Activated B cell treated with CpG ODN at 0.5 μM for 24 hours (primary cell): ENCODE measurements at regions of chr4 and their contacts with region 1.

Region 1: GRCh38 chr4:118278473-118279274 is 74.1 kb downstream of the PRSS12 start:
- DNase-seq: peak; percentile 90
- ATAC-seq: peak; percentile 98
- H3K4me3 Mint-ChIP-seq: peak overlapping the region; percentile 94
- H3K27ac Mint-ChIP-seq: peak overlapping the region; percentile 97
- H3K4me1 Mint-ChIP-seq: peaks cover 61% of the 10 kb centered on the region
- H3K27me3 Mint-ChIP-seq: no peaks in the 10 kb centered on the region
- CTCF ChIP-seq: no peak

Region 2: GRCh38 chr4:117210551-117210950 is 1068.1 kb before region 1 on chr4:
- CTCF ChIA-PET with region 1: no interaction called
- POLR2A ChIA-PET with region 1: no interaction called
- intact Hi-C with region 1: no loop called
- DNase-seq: no peak
- ATAC-seq: no peak
- H3K4me3 Mint-ChIP-seq: no peak overlapping the region
- H3K27ac Mint-ChIP-seq: no peak overlapping the region
- H3K4me1 Mint-ChIP-seq: no peaks in the 10 kb centered on the region
- H3K27me3 Mint-ChIP-seq: no peaks in the 10 kb centered on the region
- CTCF ChIP-seq: no peak

Region 3: DNA sequence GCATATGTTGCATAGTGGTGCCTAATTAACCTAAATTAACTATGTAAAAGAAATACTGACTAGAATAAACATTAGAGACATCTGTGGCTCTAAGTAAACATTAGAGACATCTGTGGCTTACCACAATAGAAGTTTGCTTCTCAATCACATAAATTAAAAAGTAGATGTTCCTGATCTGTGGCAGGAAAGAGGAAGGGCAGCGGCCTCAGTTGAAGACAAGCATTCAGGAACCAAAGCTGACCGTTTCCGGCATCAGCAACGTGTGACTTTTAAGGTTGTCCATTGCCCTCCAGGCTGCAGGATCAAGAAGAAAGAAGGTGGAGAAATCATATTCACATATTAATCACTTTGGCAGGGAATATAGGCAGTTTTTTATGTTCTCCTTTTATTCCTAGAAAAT is 857.0 kb before region 1 on chr4:
- CTCF ChIA-PET with region 1: no interaction called
- POLR2A ChIA-PET with region 1: no interaction called
- intact Hi-C with region 1: no loop called
- DNase-seq: no peak
- ATAC-seq: no peak
- H3K4me3 Mint-ChIP-seq: no peak overlapping the region
- H3K27ac Mint-ChIP-seq: no peak overlapping the region
- H3K4me1 Mint-ChIP-seq: no peaks in the 10 kb centered on the region
- H3K27me3 Mint-ChIP-seq: no peaks in the 10 kb centered on the region
- CTCF ChIP-seq: no peak

Region 4: GRCh38 chr4:117596917-117597480 is 681.7 kb before region 1 on chr4:
- CTCF ChIA-PET with region 1: no interaction called
- POLR2A ChIA-PET with region 1: no interaction called
- intact Hi-C with region 1: no loop called
- DNase-seq: no peak
- ATAC-seq: no peak
- H3K4me3 Mint-ChIP-seq: no peak overlapping the region
- H3K27ac Mint-ChIP-seq: no peak overlapping the region
- H3K4me1 Mint-ChIP-seq: no peaks in the 10 kb centered on the region
- H3K27me3 Mint-ChIP-seq: no peaks in the 10 kb centered on the region
- CTCF ChIP-seq: no peak

Region 5: DNA sequence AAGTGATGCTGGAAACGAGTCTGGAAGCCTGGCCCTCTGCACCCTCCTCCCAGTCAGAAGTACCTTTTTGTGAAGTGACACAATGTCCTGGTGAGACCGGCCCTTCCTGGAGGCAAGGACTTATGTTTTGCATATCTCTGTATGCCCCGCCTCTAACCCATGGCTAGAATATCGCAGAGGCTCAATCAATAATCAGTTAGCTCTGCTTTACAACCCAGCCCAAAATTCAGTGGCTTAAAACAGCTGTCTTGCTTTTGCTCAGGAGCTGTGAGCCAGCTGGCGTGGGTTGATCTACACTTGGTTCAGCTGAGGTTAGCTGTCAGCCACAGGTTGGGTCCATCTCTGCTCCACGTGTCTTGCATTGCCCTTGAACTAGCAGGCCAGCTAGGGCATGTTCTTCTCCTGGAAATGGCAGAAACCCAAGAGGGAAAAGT is 307.7 kb after region 1 on chr4:
- CTCF ChIA-PET with region 1: no interaction called
- POLR2A ChIA-PET with region 1: no interaction called
- intact Hi-C with region 1: loop called (anchors 1 kb)
- DNase-seq: no peak
- ATAC-seq: no peak
- H3K4me3 Mint-ChIP-seq: no peak overlapping the region
- H3K27ac Mint-ChIP-seq: no peak overlapping the region
- H3K4me1 Mint-ChIP-seq: peaks cover 11% of the 10 kb centered on the region
- H3K27me3 Mint-ChIP-seq: peaks cover 20% of the 10 kb centered on the region
- CTCF ChIP-seq: no peak

Region 6: GRCh38 chr4:118765399-118765798 is 486.7 kb after region 1 on chr4:
- CTCF ChIA-PET with region 1: no interaction called
- POLR2A ChIA-PET with region 1: no interaction called
- intact Hi-C with region 1: loop called (anchors 10 kb)
- DNase-seq: no peak
- ATAC-seq: no peak
- H3K4me3 Mint-ChIP-seq: no peak overlapping the region
- H3K27ac Mint-ChIP-seq: no peak overlapping the region
- H3K4me1 Mint-ChIP-seq: peaks cover 8% of the 10 kb centered on the region
- H3K27me3 Mint-ChIP-seq: no peaks in the 10 kb centered on the region
- CTCF ChIP-seq: no peak

Region 7: DNA sequence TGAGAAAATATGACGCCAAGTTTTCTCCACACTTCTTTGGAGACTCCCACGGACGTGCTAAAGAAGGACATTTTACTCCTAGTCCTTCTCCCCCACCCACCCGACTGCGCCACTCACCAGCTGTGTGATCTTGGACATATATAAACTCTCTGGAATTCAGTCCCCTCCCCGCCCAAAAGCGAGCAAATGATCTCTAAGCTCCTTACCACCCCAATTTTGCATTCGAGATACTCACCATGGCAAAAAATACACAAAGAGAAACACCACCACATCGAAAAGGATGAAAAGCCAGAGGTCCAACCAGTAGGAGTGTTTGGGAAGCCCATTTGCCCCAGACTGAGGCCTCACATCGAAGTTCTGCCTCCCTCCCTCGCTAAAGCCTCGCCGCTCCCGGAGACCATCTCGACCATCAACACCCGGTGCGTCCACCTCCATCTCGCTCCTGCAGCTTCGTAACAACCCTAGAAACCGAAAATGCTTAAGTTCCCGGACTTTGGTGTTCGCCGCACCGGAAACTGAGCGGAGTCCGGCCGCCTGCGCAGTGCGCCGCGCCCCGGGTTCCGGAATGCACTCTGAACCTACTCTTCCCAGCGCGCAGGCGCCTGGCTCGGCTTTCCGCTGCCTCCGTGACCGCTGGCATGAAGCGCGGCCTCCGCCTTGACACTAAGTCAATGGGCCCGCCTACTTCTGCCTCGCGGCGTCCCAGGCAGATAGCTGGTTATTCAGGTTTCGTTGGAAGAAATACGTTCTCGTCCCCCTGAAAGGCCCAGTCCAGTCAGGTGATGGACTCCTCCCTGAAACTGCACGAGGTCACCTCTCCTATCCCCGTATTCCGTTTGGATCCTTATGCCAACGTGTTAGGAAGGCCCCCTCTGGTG is 1021.7 kb after region 1 on chr4:
- CTCF ChIA-PET with region 1: no interaction called
- POLR2A ChIA-PET with region 1: no interaction called
- intact Hi-C with region 1: loop called (anchors 2 kb)
- DNase-seq: peak; percentile 88
- ATAC-seq: peak; percentile 95
- H3K4me3 Mint-ChIP-seq: peak overlapping the region; percentile 99
- H3K27ac Mint-ChIP-seq: peak overlapping the region; percentile 97
- H3K4me1 Mint-ChIP-seq: peaks cover 37% of the 10 kb centered on the region
- H3K27me3 Mint-ChIP-seq: no peaks in the 10 kb centered on the region
- CTCF ChIP-seq: no peak